Activated CD4-positive, alpha-beta memory T cell treated with anti-CD3 and anti-CD28 coated beads for 36 hours (primary cell): ENCODE measurements at regions of chr20 and their contacts with region 1.

Region 1: GRCh38 chr20:51335329-51335841 is 207.1 kb downstream of the NFATC2 start:
- DNase-seq: peak; percentile 79
- H3K4me3 Mint-ChIP-seq: no peak overlapping the region
- H3K27ac Mint-ChIP-seq: peak overlapping the region; percentile 59
- H3K4me1 Mint-ChIP-seq: peaks cover 28% of the 10 kb centered on the region
- H3K27me3 Mint-ChIP-seq: peaks cover 2% of the 10 kb centered on the region

Region 2: DNA sequence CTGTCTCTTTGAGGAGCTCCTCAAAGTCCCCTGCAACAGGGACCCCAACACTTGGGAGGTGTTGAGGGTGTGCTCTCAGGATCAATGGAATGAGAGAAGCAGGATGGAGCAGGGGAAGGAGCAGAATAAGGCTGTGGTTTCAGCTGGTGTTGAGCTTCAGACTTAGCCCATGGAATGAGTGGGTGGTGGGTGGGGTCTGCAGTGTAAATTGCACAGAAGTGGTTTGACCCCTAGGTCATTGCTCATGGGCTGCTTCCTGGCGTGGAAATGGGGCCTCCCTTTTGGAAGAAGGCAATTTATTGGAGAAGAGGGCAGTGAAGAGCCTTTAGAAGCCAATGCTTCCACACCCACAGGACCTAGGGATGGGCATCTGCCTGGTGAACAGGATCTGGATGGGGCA is 275.5 kb before region 1 on chr20:
- CTCF ChIA-PET with region 1: no interaction called
- POLR2A ChIA-PET with region 1: no interaction called
- intact Hi-C with region 1: loop called (anchors 5 kb)
- DNase-seq: peak; percentile 17
- H3K4me3 Mint-ChIP-seq: no peak overlapping the region
- H3K27ac Mint-ChIP-seq: no peak overlapping the region
- H3K4me1 Mint-ChIP-seq: peaks cover 48% of the 10 kb centered on the region
- H3K27me3 Mint-ChIP-seq: peaks cover 27% of the 10 kb centered on the region

Region 3: DNA sequence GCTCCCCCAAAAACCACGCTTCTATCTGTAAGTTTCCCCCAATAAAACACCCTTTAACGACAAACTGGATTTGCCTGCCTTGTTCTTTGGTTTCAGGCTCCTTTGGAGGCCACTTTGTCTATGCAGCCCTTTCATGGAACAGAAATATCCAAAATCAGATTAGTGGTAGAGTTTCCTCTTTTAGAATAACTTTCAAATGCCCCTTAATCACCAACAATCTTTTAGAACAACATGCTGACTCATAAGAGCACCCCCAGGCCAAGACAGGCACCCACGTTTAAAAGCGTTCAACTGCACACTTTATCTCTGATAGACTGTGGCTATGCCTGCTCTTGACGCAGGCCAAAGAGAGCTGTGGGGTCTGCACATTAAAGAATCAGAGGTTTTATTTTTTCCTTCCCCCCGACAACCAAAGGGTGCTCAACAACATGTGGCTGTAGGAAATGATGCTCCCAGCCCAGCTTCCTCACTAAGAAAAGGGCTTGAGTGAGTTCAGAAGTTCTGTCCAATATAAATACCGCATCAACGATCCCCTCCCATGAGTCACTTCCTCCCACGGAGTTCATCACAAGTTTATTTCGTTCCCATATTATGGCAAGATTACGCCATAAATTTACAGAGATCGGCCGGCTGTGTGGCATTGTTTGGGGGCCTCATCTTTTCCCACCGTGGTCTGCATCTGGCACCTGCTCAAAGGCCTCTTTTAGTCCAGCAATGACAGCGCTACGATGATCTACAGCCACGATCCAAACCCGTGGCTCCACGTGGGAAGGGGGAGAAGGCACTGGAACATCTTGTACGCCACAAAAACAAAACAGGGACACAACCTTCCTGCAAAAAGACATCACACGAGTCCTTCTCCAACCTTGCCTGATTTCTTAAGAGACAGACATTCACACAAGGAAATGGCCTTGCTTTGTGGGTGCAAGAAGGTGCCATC is 295.9 kb after region 1 on chr20:
- CTCF ChIA-PET with region 1: no interaction called
- POLR2A ChIA-PET with region 1: no interaction called
- intact Hi-C with region 1: loop called (anchors 1 kb)
- DNase-seq: peak; percentile 68
- H3K4me3 Mint-ChIP-seq: peak overlapping the region; percentile 38
- H3K27ac Mint-ChIP-seq: peak overlapping the region; percentile 82
- H3K4me1 Mint-ChIP-seq: peaks cover 79% of the 10 kb centered on the region
- H3K27me3 Mint-ChIP-seq: peaks cover 21% of the 10 kb centered on the region

Region 4: GRCh38 chr20:51661609-51662178 is 326.3 kb after region 1 on chr20:
- CTCF ChIA-PET with region 1: no interaction called
- POLR2A ChIA-PET with region 1: no interaction called
- intact Hi-C with region 1: loop called (anchors 1 kb)
- DNase-seq: peak; percentile 65
- H3K4me3 Mint-ChIP-seq: no peak overlapping the region
- H3K27ac Mint-ChIP-seq: peak overlapping the region; percentile 29
- H3K4me1 Mint-ChIP-seq: peaks cover 22% of the 10 kb centered on the region
- H3K27me3 Mint-ChIP-seq: peaks cover 10% of the 10 kb centered on the region